Breast epithelium (tissue), 4 donors: ENCODE measurements at regions of chr1 and their contacts with region 1.

Region 1: DNA sequence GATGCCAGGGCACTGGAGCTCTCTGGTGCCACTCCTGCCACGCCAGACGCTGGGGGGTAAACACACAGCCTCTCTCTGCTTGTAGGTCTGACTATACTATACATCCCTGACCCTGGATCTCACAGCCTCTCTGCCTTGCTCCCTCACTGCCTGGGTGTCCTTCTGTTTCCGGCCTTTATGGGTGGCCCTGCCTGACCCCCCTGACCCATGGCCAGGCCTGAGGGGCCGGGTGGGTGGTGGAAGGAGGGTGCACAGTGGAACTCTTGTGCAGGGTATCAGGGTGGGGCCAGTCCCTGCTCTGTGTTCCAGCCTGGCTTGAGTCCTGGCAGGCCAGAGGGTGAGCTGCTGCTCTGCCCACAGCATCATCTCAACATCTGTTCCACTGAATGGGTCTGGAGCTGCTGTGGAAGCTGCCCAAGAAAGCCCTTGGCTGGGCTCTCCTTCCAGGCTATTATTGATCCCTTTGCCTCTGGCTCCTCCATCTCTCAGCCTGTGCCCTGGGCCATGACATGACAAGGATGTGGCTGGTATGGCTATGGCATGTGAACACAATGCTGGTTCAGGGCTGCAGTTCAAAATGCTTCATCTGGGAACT is 17.2 kb upstream of the SYNC start:
- DNase-seq: no peak
- H3K4me3 ChIP-seq: no peak overlapping the region
- H3K27ac ChIP-seq: no peak overlapping the region
- H3K4me1 ChIP-seq: peaks cover 0 to 6% of the 10 kb centered on the region in 2 donors
- H3K27me3 ChIP-seq: no peaks in the 10 kb centered on the region
- CTCF ChIP-seq: no peak
- POLR2A ChIP-seq: no peak

Region 2: GRCh38 chr1:32765570-32766327 is 46.0 kb after region 1 on chr1:
- intact Hi-C with region 1: loop called (anchors 1 kb)
- DNase-seq: no peak
- H3K4me3 ChIP-seq: no peak overlapping the region
- H3K27ac ChIP-seq: peak overlapping the region; percentile 86 to 97
- H3K4me1 ChIP-seq: peaks cover 3 to 33% of the 10 kb centered on the region in 2 donors
- H3K27me3 ChIP-seq: no peaks in the 10 kb centered on the region
- CTCF ChIP-seq: no peak
- POLR2A ChIP-seq: no peak